ENCODE measurements at regions of chr19 and their contacts with region 1.

Region 1: DNA sequence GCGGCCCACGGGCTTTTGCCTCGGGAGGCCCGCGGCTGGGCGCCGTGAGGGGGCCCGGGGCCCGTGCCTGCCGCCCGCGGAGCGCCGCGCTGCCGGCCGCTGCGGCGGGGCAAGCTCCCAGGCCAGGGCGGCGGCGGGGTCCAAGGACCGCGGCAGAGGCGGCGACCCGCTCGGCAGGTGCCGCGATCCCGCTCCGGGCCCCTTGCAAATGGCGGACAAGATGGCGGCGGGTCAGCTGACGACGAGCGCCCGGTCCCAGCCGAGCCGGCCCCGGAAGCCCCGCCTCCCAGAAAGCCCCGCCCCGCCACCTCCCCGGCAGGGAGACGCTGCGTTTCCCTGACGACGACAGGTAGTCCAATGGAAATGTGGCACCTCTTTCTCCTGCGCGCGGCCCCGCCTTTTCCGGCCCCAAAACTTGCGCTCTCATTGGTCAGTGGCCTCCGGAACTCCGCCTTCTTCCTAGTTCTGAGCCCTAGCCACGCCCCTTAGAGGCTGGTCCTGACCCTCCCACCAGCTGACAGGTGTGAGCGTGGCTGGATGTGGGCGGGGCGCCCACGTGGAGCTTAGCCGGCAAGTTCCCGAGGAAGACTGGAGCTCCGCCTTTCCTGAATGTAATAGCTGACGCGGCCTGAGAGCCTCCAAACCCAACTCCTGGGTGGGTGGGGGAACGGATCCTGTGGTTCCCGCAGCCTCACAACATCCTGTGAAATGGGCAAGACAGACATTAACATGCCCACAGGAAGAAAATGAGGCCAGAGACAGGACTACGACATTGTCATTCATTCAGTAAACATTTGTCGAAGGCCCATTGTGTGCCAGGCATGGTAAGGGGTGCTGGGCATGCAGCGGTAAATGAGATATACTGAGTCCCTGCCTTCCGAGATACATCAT is at the start of gene AP3D1:
- DNase-seq: peak; percentile 100
- H3K4me3 ChIP-seq: peak within 1 kb of the TSS; percentile 60 to 96 (median 61)
- H3K27ac ChIP-seq: peak within 1 kb of the TSS; percentile 75
- H3K4me1 ChIP-seq: peaks cover 8% of the 10 kb centered on the region
- H3K27me3 ChIP-seq: no peaks in the 10 kb centered on the region
- CTCF ChIP-seq: no peak
- POLR2A ChIP-seq: no peak
- total RNA-seq, gene AP3D1: 137 and 143 TPM in 2 replicates

Region 2: GRCh38 chr19:2096480-2097329 is 54.9 kb before region 1 on chr19 and contains the start of gene IZUMO4:
- CTCF ChIA-PET with region 1: no interaction called
- POLR2A ChIA-PET with region 1: no interaction called
- dilution Hi-C with region 1: no loop called
- intact Hi-C with region 1: loop called (anchors 1 kb)
- DNase-seq: peak; percentile 97
- H3K4me3 ChIP-seq: peak within 1 kb of the TSS; percentile 58 to 90 (median 75)
- H3K27ac ChIP-seq: peak within 1 kb of the TSS; percentile 75
- H3K4me1 ChIP-seq: peaks cover 13% of the 10 kb centered on the region
- H3K27me3 ChIP-seq: no peaks in the 10 kb centered on the region
- CTCF ChIP-seq: peak in 1 of 2 donors; percentile 58
- POLR2A ChIP-seq: no peak
- total RNA-seq, gene IZUMO4: 1.1 and 2.0 TPM in 2 replicates

Region 3: GRCh38 chr19:2199215-2199614 is 47.6 kb after region 1 on chr19:
- CTCF ChIA-PET with region 1: interaction called, 13 read pairs
- POLR2A ChIA-PET with region 1: no interaction called
- dilution Hi-C with region 1: no loop called
- intact Hi-C with region 1: no loop called
- DNase-seq: no peak
- H3K4me3 ChIP-seq: no peak overlapping the region
- H3K27ac ChIP-seq: no peak overlapping the region
- H3K4me1 ChIP-seq: no peaks in the 10 kb centered on the region
- H3K27me3 ChIP-seq: no peaks in the 10 kb centered on the region
- CTCF ChIP-seq: peak; percentile 21 to 38
- POLR2A ChIP-seq: no peak

Region 4: GRCh38 chr19:2236314-2237050 is 84.9 kb after region 1 on chr19 and contains the starts of genes PLEKHJ1 and SF3A2:
- CTCF ChIA-PET with region 1: interaction called, 27 read pairs
- POLR2A ChIA-PET with region 1: interaction called, 3 read pairs
- dilution Hi-C with region 1: no loop called
- intact Hi-C with region 1: loop called (anchors 1 kb)
- DNase-seq: peak; percentile 99
- H3K4me3 ChIP-seq: peak within 1 kb of the TSS; percentile 56 to 86 (median 80)
- H3K27ac ChIP-seq: peak within 1 kb of the TSS; percentile 66
- H3K4me1 ChIP-seq: peaks cover 41% of the 10 kb centered on the region
- H3K27me3 ChIP-seq: no peaks in the 10 kb centered on the region
- CTCF ChIP-seq: peak; percentile 99
- POLR2A ChIP-seq: peak; percentile 71
- total RNA-seq, gene PLEKHJ1: 73.4 and 82.4 TPM in 2 replicates
- total RNA-seq, gene SF3A2: 140 and 164 TPM in 2 replicates

Region 5: DNA sequence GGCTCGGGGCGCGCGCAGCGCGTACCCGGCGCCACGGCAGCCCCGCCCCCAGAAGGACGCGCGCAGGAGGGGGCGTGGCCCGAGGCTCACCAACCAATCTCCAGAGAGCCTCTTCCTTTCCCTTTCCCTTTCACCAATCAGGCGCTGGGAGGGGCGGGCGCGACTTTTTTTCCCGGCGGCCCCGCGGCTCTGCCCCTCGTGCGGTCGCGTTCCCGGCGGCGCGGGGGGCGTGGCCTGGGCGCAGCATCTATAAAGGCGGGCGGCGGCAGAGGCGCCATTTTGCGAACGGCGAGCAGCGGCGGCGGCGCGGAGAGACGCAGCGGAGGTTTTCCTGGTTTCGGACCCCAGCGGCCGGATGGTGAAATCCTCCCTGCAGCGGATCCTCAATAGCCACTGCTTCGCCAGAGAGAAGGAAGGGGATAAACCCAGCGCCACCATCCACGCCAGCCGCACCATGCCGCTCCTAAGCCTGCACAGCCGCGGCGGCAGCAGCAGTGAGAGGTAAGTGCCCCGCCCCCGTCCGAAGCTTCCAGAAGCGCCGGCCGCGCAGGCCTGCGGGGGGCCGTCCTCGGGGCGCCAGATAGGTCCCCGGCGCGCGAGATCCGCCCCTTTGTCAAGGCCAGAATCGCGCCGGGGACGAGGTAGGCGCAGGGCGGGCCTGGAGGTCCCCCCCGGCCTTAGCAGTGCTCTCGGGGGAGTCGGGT is 117.8 kb after region 1 on chr19:
- CTCF ChIA-PET with region 1: interaction called, 13 read pairs
- POLR2A ChIA-PET with region 1: no interaction called
- dilution Hi-C with region 1: no loop called
- intact Hi-C with region 1: loop called (anchors 1 kb)
- DNase-seq: peak; percentile 95
- H3K4me3 ChIP-seq: peak overlapping the region; percentile 66 to 95 (median 92)
- H3K27ac ChIP-seq: peak overlapping the region; percentile 57
- H3K4me1 ChIP-seq: peaks cover 38% of the 10 kb centered on the region
- H3K27me3 ChIP-seq: no peaks in the 10 kb centered on the region
- CTCF ChIP-seq: no peak
- POLR2A ChIP-seq: peak; percentile 99

Measured in endothelial cell of umbilical vein (primary cell).